ENCODE measurements at regions of chr13 and their contacts with region 1.

Region 1: DNA sequence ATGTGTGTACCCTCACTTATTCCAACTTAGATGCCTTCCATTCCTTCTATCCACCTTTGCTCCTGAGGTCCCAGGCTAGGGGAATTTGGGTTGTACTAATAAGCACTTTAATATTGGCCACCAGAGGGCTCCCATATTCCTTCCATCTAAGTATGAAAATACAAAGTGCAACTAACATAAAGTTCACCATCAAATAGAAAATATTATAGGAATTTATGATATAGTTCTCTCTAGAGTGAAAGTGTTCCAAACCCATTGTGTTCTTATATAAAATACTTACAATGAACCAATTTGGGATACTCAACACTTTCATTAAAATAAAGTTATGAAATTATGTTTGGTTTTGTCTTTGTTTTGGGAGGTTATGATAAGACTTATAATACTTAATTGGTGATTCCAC is 62.3 kb downstream of the ITGBL1 start:
- DNase-seq: no peak
- H3K4me3 ChIP-seq: no peak overlapping the region
- H3K27ac ChIP-seq: no peak overlapping the region
- H3K4me1 ChIP-seq: no peaks in the 10 kb centered on the region
- H3K27me3 ChIP-seq: no peaks in the 10 kb centered on the region
- CTCF ChIP-seq: peak in 2 of 3 experiments; percentile 38 to 58
- POLR2A ChIP-seq: no peak

Region 2: DNA sequence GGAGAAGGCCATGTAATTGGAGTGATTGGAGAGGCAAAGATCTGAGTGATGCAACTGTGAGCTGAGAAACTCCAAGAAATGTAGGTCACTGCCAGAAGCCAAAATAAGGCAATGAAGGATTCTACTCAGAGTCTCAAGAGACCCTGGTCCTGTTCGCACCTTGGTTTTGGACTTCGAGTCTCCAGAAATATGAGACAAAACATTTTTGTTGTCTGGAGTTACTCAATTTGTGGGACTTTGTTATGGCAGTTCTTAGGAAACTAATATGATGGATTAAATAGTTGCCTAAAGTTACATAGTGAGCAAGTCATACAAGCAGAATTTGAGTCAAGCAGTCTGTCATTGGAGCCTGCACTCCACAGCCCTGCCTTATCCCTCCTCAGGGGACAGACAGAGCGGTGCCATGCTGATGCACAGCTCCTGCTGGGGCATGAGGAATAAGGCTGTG is 41.9 kb after region 1 on chr13:
- intact Hi-C with region 1: no loop called
- DNase-seq: no peak
- H3K4me3 ChIP-seq: no peak overlapping the region
- H3K27ac ChIP-seq: no peak overlapping the region
- H3K4me1 ChIP-seq: no peaks in the 10 kb centered on the region
- H3K27me3 ChIP-seq: no peaks in the 10 kb centered on the region
- CTCF ChIP-seq: no peak
- POLR2A ChIP-seq: no peak

Region 3: GRCh38 chr13:101757446-101758039 is 242.8 kb after region 1 on chr13:
- intact Hi-C with region 1: loop called (anchors 10 kb)
- DNase-seq: no peak
- H3K4me3 ChIP-seq: no peak overlapping the region
- H3K27ac ChIP-seq: no peak overlapping the region
- H3K4me1 ChIP-seq: no peaks in the 10 kb centered on the region
- H3K27me3 ChIP-seq: no peaks in the 10 kb centered on the region
- CTCF ChIP-seq: peak in 1 of 3 experiments; percentile 31
- POLR2A ChIP-seq: no peak